WTC11 (cell line): ENCODE measurements at regions of chr2 and their contacts with region 1.

Region 1: GRCh38 chr2:152717228-152718075 is at the start of gene PRPF40A:
- DNase-seq: peak; percentile 99
- ATAC-seq: peak; percentile 80
- H3K4me3 Mint-ChIP-seq: peak within 1 kb of the TSS; percentile 97
- H3K27ac Mint-ChIP-seq: peak within 1 kb of the TSS; percentile 100
- H3K4me1 Mint-ChIP-seq: peaks cover 33% of the 10 kb centered on the region
- H3K27me3 Mint-ChIP-seq: no peaks in the 10 kb centered on the region
- CTCF ChIP-seq: no peak
- total RNA-seq, gene PRPF40A: 171 to 189 TPM (median 176 TPM) in 3 replicates

Region 2: GRCh38 chr2:152706477-152707020 is 10.9 kb before region 1 on chr2:
- CTCF ChIA-PET with region 1: interaction called, 3 read pairs
- POLR2A ChIA-PET with region 1: interaction called, 10 read pairs
- DNase-seq: no peak
- ATAC-seq: no peak
- H3K4me3 Mint-ChIP-seq: no peak overlapping the region
- H3K27ac Mint-ChIP-seq: no peak overlapping the region
- H3K4me1 Mint-ChIP-seq: peaks cover 49% of the 10 kb centered on the region
- H3K27me3 Mint-ChIP-seq: no peaks in the 10 kb centered on the region
- CTCF ChIP-seq: no peak

Region 3: GRCh38 chr2:152743002-152743401 is 25.6 kb after region 1 on chr2:
- CTCF ChIA-PET with region 1: interaction called, 11 read pairs
- POLR2A ChIA-PET with region 1: interaction called, 3 read pairs
- DNase-seq: no peak
- ATAC-seq: peak; percentile 67; the same call in 1 of the 2 replicates
- H3K4me3 Mint-ChIP-seq: no peak overlapping the region
- H3K27ac Mint-ChIP-seq: no peak overlapping the region
- H3K4me1 Mint-ChIP-seq: no peaks in the 10 kb centered on the region
- H3K27me3 Mint-ChIP-seq: no peaks in the 10 kb centered on the region
- CTCF ChIP-seq: peak; percentile 19; the same call in 1 of the 2 replicates